Transverse colon (tissue), 4 donors: ENCODE measurements at regions of chr3 and their contacts with region 1.

Region 1: GRCh38 chr3:151925876-151926275 is 52.4 kb downstream of the SUCNR1 start:
- DNase-seq: no peak
- H3K4me3 ChIP-seq: no peak overlapping the region
- H3K27ac ChIP-seq: no peak overlapping the region
- H3K4me1 ChIP-seq: no peaks in the 10 kb centered on the region
- H3K27me3 ChIP-seq: no peaks in the 10 kb centered on the region
- CTCF ChIP-seq: no peak
- EP300 ChIP-seq: no peak
- POLR2A ChIP-seq: no peak

Region 2: DNA sequence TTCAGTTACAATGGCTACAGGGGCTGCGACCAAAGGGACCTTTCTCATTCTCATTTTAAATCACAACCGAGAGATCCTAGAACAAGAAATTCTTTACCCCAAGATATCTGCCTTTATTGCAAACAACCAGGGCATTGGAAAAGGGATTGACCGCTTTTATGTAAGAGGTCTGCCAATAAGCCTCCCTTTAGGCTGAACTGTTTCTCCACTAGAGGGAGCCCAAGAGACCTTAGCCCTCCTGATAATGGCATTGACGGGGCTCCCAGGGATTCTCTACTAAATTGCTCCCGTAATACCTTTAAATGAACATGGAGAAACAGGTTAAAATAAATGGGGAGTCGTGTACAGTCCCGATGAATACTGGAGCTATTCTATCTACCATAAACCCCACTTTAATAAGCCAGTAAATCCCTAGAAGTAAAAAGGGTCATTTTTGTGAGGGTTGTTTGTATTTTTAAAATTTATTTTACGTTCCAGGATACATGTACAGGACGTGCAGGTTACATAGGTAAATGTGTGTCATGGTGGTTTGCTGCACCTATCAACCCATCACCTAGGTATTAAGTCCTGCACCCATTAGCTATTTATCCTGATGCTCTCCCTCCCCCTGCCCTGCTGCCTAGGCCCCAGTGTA is 457.5 kb before region 1 on chr3:
- in situ Hi-C with region 1: no loop called
- intact Hi-C with region 1: loop called (anchors 10 kb)
- DNase-seq: peak; percentile 31
- H3K4me3 ChIP-seq: no peak overlapping the region
- H3K27ac ChIP-seq: no peak overlapping the region
- H3K4me1 ChIP-seq: no peaks in the 10 kb centered on the region
- H3K27me3 ChIP-seq: no peaks in the 10 kb centered on the region
- CTCF ChIP-seq: peak; percentile 62 to 91 (median 88)
- EP300 ChIP-seq: no peak
- POLR2A ChIP-seq: no peak

Region 3: GRCh38 chr3:151999936-152000335 is 74.1 kb after region 1 on chr3:
- in situ Hi-C with region 1: no loop called
- intact Hi-C with region 1: no loop called
- DNase-seq: no peak
- H3K4me3 ChIP-seq: no peak overlapping the region
- H3K27ac ChIP-seq: no peak overlapping the region
- H3K4me1 ChIP-seq: peaks cover 0 to 4% (median 0%) of the 10 kb centered on the region in 4 donors
- H3K27me3 ChIP-seq: no peaks in the 10 kb centered on the region
- CTCF ChIP-seq: no peak
- EP300 ChIP-seq: no peak
- POLR2A ChIP-seq: no peak

Region 4: DNA sequence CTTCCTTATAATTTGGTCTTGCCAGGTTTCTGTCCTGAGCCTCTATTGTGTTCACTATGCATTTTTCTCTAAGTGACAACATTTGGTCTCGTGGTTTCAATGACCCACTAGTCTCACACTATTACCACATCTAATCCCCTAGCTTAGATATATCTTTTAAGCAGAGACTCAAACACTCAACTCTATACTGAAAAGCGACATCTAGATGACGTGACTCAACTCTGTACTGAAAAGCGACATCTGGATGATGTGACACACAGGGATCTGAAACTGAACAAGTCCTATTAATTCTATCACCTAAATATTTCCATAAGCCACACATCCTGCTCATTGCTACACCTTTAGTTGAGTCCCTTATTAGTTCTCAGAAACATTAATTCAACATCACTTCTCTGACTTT is 201.2 kb after region 1 on chr3:
- in situ Hi-C with region 1: no loop called
- intact Hi-C with region 1: no loop called
- DNase-seq: no peak
- H3K4me3 ChIP-seq: no peak overlapping the region
- H3K27ac ChIP-seq: no peak overlapping the region
- H3K4me1 ChIP-seq: no peaks in the 10 kb centered on the region
- H3K27me3 ChIP-seq: no peaks in the 10 kb centered on the region
- CTCF ChIP-seq: no peak
- EP300 ChIP-seq: no peak
- POLR2A ChIP-seq: no peak